Activated T-helper 2 cell treated with anti-CD3 and anti-CD28 coated beads, Interferon-gamma antibody, Interleukin-2, Interleukin-4, amounts not matched to agents 10 μg/mL and 5 μg/mL and 100 μg/mL, durations not matched to agents 14 hours and 24 hours and 36 hours (primary cell): ENCODE measurements at regions of chr9 and their contacts with region 1.

Region 1: GRCh38 chr9:92790542-92791527 is 26.2 kb upstream of the BICD2 start:
- DNase-seq: peak; percentile 55
- H3K4me3 Mint-ChIP-seq: no peak overlapping the region
- H3K27ac Mint-ChIP-seq: peak overlapping the region; percentile 36
- H3K4me1 Mint-ChIP-seq: peaks cover 11% of the 10 kb centered on the region
- H3K27me3 Mint-ChIP-seq: peaks cover 14% of the 10 kb centered on the region

Region 2: GRCh38 chr9:92133949-92134604 is 656.8 kb before region 1 on chr9:
- intact Hi-C with region 1: loop called (anchors 10 kb)
- DNase-seq: peak; percentile 67
- H3K4me3 Mint-ChIP-seq: peak overlapping the region; percentile 57
- H3K27ac Mint-ChIP-seq: no peak overlapping the region
- H3K4me1 Mint-ChIP-seq: peaks cover 6% of the 10 kb centered on the region
- H3K27me3 Mint-ChIP-seq: peaks cover 22% of the 10 kb centered on the region

Region 3: DNA sequence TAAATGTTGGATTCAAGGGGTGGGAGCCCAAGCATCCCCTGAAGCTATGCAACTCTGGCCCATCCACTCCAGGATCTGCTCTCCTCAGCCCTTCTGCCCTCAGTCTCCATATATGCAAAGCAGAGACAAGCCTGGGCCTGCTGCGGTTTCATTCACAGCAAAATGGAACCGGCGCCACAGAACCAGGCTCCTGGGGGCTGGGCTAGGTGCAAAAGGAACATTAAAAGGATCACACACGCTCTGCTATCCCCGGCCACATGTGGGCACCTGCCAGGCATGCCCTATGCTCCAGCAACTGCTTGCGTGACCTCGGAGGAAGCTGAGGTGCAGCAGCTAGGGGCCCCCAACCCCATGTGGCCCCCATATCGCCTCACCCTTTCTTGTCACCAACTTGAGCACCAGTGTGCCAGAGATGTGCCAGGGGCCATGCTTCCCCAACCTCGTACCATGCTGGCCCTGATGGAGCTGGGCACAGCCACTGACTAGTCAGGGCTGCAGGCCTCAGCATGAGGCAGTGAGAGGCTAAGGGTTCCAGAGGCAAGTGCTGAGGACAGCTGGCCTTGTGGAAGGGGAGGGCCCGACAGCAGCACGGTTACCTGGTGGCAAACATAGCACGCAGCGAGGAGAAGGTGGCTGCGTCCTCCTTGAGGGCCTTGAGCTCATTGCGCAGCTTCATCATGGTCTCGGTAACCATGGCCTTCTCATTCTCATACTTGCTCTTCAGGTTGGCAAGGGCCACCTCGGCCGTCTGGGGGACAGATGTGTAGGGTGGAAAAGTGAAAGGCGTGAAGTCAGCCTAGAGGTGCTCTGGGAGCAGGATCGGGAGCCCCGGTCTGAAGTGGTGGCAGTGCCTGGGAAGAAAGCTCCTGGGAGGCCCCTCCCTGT is 73.4 kb before region 1 on chr9:
- intact Hi-C with region 1: loop called (anchors 1 kb)
- DNase-seq: peak; percentile 7
- H3K4me3 Mint-ChIP-seq: no peak overlapping the region
- H3K27ac Mint-ChIP-seq: no peak overlapping the region
- H3K4me1 Mint-ChIP-seq: peaks cover 9% of the 10 kb centered on the region
- H3K27me3 Mint-ChIP-seq: no peaks in the 10 kb centered on the region

Region 4: DNA sequence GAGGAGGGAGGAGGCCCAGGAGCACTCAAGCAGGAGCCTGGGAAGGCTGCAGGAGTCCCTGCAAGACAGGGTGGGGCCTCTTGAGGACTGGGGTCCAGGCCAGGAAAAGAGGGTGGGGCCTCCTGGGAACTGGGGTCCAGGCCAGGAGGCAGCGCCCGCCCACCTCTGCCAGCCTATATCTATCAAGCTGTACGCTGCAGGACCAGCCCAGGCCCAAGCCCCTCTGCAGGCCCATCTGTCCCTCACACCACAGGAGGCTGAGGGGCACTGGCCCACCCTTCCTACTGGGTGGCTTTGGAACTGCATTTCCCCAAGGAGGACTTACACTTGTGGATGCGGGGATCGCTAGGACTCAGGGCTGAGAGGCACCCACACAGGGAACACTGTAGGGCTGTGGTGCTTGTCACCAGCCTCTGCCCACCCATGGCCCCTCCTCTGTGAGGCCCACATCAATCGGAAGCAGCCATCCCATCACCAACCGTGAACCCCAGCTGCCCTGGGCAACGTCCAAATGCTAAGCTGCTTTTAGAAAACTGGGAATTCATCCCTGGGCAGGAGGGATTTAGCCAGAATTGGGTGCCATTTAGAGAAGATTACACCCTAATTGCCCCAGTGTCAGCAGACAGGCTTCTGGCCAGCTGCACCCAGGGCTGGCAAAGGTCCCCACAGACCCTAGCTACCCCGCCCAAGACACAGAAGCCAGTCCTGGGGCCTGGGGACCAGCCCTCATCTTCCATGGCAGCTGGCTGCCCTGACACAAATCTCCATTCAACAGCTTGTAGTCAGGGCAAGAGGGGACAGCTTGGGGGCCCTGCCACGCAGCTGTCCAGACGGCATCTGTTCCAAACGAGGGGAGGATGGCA is 41.5 kb before region 1 on chr9:
- intact Hi-C with region 1: no loop called
- DNase-seq: no peak
- H3K4me3 Mint-ChIP-seq: no peak overlapping the region
- H3K27ac Mint-ChIP-seq: no peak overlapping the region
- H3K4me1 Mint-ChIP-seq: peaks cover 17% of the 10 kb centered on the region
- H3K27me3 Mint-ChIP-seq: no peaks in the 10 kb centered on the region

Region 5: GRCh38 chr9:92774274-92774673 is 16.6 kb before region 1 on chr9:
- intact Hi-C with region 1: no loop called
- DNase-seq: no peak
- H3K4me3 Mint-ChIP-seq: no peak overlapping the region
- H3K27ac Mint-ChIP-seq: no peak overlapping the region
- H3K4me1 Mint-ChIP-seq: peaks cover 3% of the 10 kb centered on the region
- H3K27me3 Mint-ChIP-seq: peaks cover 2% of the 10 kb centered on the region

Region 6: DNA sequence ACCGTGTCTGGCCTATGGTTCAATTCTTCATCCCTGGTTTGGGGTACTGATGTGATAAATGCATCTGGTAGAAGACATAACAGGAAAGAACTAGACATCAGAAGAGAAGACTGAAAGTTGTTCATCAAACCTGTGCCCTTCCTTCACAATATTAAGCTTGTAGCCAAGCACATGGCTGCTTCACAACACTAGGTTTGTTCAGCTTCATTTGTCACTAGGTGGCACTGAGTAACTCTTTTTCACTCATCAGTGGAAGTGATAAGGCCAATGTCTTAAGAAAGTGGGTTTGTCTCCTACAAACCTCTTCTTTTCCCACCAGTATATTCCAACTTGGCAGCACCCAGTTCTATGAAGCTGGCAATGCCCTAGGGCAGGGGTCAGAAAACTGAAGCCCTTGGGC is 60.0 kb after region 1 on chr9:
- intact Hi-C with region 1: no loop called
- DNase-seq: no peak
- H3K4me3 Mint-ChIP-seq: no peak overlapping the region
- H3K27ac Mint-ChIP-seq: no peak overlapping the region
- H3K4me1 Mint-ChIP-seq: no peaks in the 10 kb centered on the region
- H3K27me3 Mint-ChIP-seq: no peaks in the 10 kb centered on the region